ENCODE measurements at regions of chr14 and their contacts with region 1.

Region 1: DNA sequence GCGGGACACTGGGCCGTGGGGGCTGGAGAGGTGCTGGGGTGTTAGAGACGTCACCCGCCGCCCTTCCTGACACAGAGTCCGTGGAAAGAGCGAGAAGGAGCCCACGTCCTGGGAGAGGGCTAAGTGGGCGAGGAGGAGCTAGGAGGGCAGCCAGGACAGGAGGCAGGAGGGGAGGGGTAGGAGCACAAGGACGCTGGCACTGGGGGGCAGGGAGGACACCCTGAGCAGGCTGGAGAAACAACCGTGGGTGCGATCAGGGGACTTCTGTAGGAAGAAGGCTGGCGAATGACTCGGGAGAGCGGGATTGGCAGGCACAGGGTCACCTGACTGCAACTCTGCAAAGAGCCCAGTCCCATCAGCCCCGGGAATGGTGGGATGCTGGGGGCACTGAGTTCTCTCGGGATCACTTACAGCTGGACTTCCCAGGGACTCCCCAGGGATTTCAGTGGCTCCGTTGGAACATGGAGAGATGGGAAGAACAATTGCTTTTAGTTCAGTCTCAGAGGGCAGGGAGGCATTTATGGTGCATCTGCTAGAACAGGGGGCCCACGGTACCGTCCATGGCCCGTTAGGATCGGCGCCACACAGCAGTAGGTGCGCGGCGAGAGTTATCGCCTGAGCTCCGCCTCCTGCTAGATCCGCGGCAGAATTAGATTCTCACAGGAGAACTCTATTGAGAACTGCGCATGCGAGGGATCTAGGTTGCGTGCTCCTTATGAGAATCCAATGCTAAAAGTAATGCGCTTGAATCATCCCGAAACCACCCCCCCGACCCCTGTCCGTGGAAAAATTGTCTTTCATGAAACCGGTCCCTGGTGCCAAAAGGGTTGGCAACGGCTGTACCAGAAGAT is 24.3 kb downstream of the UBR7 start:
- ATAC-seq: peak in 4 of 8 experiments; percentile 4 to 84 (median 76)
- H3K4me3 ChIP-seq: no peak overlapping the region
- H3K27ac ChIP-seq: no peak overlapping the region
- H3K4me1 ChIP-seq: no peaks in the 10 kb centered on the region

Region 2: DNA sequence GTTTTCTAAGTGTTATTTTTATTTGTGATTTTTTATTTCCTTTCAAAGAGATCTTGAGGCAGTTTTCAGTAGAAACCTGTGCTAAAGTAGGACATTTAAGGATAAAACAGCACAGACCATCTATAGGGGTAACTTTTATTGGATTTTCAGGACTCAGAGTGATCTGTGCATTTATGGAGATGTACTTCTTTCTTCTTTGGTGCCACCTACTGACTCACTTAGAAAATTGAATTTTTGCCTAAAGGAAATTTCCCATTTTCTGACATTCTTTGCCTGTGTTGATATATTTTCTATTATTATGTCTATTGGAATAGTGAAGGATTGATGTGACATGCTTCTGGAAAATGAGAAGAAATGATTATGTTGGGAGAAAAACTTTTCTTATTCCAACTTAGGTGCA is 312.4 kb after region 1 on chr14:
- in situ Hi-C with region 1: loop called in 2 of 9 experiments (anchors 25 kb)
- ATAC-seq: peak in 3 of 8 experiments; percentile 20 to 40 (median 34)
- H3K4me3 ChIP-seq: no peak overlapping the region
- H3K27ac ChIP-seq: no peak overlapping the region
- H3K4me1 ChIP-seq: no peaks in the 10 kb centered on the region

Region 3: GRCh38 chr14:93619176-93619793 is 387.9 kb after region 1 on chr14:
- in situ Hi-C with region 1: loop called in 1 of 9 experiments (anchors 25 kb)
- ATAC-seq: peak in 4 of 8 experiments; percentile 26 to 60 (median 43)
- H3K4me3 ChIP-seq: no peak overlapping the region
- H3K27ac ChIP-seq: no peak overlapping the region
- H3K4me1 ChIP-seq: no peaks in the 10 kb centered on the region